ENCODE measurements at regions of chr1 and their contacts with region 1.

Region 1: GRCh38 chr1:160376525-160377131 is 9.8 kb downstream of the NHLH1 start:
- DNase-seq: no peak
- ATAC-seq: peak; percentile 71
- H3K4me3 Mint-ChIP-seq: peak overlapping the region; percentile 49
- H3K27ac Mint-ChIP-seq: no peak overlapping the region
- H3K4me1 Mint-ChIP-seq: peaks cover 35% of the 10 kb centered on the region
- H3K27me3 Mint-ChIP-seq: no peaks in the 10 kb centered on the region
- CTCF ChIP-seq: peak; percentile 61

Region 2: GRCh38 chr1:160161965-160162705 is 214.5 kb before region 1 on chr1:
- CTCF ChIA-PET with region 1: interaction called, 14 read pairs
- POLR2A ChIA-PET with region 1: no interaction called
- DNase-seq: peak; percentile 78
- ATAC-seq: peak; percentile 98
- H3K4me3 Mint-ChIP-seq: no peak overlapping the region
- H3K27ac Mint-ChIP-seq: no peak overlapping the region
- H3K4me1 Mint-ChIP-seq: peaks cover 20% of the 10 kb centered on the region
- H3K27me3 Mint-ChIP-seq: peaks cover 14% of the 10 kb centered on the region
- CTCF ChIP-seq: peak; percentile 59

Region 3: GRCh38 chr1:160307118-160307854 is 69.3 kb before region 1 on chr1:
- CTCF ChIA-PET with region 1: interaction called, 20 read pairs
- POLR2A ChIA-PET with region 1: interaction called, 6 read pairs
- DNase-seq: peak; percentile 67
- ATAC-seq: peak; percentile 100
- H3K4me3 Mint-ChIP-seq: peak overlapping the region; percentile 35
- H3K27ac Mint-ChIP-seq: peak overlapping the region; percentile 74; the same call in 1 of the 2 replicates
- H3K4me1 Mint-ChIP-seq: peaks cover 33% of the 10 kb centered on the region
- H3K27me3 Mint-ChIP-seq: no peaks in the 10 kb centered on the region
- CTCF ChIP-seq: no peak

Region 4: GRCh38 chr1:160362168-160362957 is 14.3 kb before region 1 on chr1:
- CTCF ChIA-PET with region 1: interaction called, 108 read pairs
- POLR2A ChIA-PET with region 1: interaction called, 14 read pairs
- DNase-seq: peak; percentile 45
- ATAC-seq: peak; percentile 55
- H3K4me3 Mint-ChIP-seq: no peak overlapping the region
- H3K27ac Mint-ChIP-seq: peak overlapping the region; percentile 75
- H3K4me1 Mint-ChIP-seq: peaks cover 44% of the 10 kb centered on the region
- H3K27me3 Mint-ChIP-seq: no peaks in the 10 kb centered on the region
- CTCF ChIP-seq: no peak

Region 5: DNA sequence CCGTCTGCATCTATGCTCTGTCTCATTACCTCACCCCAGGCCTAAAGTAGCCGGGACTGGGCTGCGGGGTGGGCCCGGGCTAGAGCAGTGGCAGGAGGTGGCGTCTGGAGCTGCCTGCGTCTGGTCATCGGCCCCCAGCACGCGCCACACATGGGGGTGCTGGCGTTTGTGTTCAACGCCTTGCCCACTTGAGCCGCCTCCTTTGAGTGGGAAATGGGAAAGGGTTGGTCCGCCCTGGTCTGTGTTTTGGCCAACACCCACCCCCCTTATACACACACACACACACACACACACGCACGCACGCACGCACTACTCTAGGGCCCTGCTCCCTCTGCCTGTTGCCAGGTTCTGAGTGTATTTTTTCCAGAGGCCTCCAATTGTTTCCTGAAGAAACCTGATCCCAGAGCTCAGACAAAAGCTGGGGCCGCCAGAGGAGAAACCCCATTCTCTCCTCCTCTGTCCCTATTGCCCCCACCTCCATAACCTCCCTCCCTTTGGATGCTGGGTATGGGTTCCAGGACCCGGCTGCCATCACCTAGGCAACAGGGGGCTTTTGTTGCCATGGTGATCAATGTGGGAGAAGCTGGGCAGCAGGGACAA is 33.9 kb after region 1 on chr1:
- CTCF ChIA-PET with region 1: interaction called, 31 read pairs
- POLR2A ChIA-PET with region 1: interaction called, 5 read pairs
- DNase-seq: peak; percentile 38
- ATAC-seq: peak; percentile 64
- H3K4me3 Mint-ChIP-seq: no peak overlapping the region
- H3K27ac Mint-ChIP-seq: peak overlapping the region; percentile 83
- H3K4me1 Mint-ChIP-seq: peaks cover 77% of the 10 kb centered on the region
- H3K27me3 Mint-ChIP-seq: no peaks in the 10 kb centered on the region
- CTCF ChIP-seq: no peak